ENCODE measurements at regions of chr12 and their contacts with region 1.

Region 1: DNA sequence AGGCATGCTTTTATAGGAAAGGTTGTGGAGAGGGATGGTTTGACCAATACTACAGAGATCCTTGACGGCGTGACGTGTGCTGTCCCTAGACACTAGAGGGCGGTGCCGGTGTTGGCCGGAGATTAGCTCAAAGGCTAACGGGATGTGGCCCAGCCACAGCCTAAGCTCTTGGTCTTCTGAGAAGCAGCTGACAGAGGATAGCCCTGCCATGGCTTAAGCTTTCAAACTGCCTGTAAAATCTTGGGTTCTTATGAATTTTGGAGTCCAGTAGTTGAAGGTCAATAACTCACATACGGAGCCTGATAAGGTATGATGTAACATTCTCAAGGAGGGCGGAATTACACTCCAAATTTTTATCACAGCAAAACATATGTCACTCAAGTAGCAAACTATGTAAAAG is 515.7 kb upstream of the ATXN7L3B start:
- DNase-seq: peak in 3 of 5 donors; percentile 13 to 65 (median 45)
- ATAC-seq: peak in 3 of 4 donors; percentile 76 to 85 (median 80)
- H3K4me3 ChIP-seq: no peak overlapping the region
- H3K27ac ChIP-seq: no peak overlapping the region
- H3K4me1 ChIP-seq: no peaks in the 10 kb centered on the region
- H3K27me3 ChIP-seq: no peaks in the 10 kb centered on the region
- CTCF ChIP-seq: peak in 10 of 12 donors; percentile 19 to 57 (median 35)
- POLR2A ChIP-seq: no peak

Region 2: GRCh38 chr12:74152370-74152769 is 130.4 kb after region 1 on chr12:
- intact Hi-C with region 1: no loop called
- DNase-seq: no peak
- ATAC-seq: no peak
- H3K4me3 ChIP-seq: no peak overlapping the region
- H3K27ac ChIP-seq: no peak overlapping the region
- H3K4me1 ChIP-seq: no peaks in the 10 kb centered on the region
- H3K27me3 ChIP-seq: no peaks in the 10 kb centered on the region
- CTCF ChIP-seq: no peak
- POLR2A ChIP-seq: no peak

Region 3: DNA sequence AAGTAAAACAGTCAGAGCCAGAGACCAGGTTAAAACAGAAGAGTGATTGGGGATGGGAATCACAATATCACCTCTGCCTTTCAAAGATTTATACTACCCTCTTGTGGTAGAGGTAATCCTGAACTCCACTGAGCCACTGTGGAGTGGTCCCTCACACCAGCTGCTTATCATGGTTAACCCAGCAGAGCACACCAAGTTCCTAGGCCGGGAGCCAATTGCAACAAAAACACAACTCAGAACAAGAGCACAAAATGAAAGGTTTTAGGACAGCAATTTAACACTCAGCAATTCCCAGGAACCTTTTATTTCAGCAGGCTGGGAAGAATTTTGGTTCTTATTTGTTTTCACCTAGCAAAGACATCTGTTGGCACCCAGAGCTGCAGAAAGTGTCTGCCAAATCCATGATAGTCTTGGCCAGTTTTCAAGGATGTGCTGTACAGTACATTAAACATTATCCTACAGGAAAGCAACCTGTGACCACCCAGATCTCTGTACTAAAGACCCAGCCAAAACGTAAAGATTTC is 295.2 kb after region 1 on chr12:
- intact Hi-C with region 1: loop called in 1 of 10 experiments (anchors 5 kb)
- DNase-seq: peak in 3 of 5 donors; percentile 21 to 57 (median 32)
- ATAC-seq: peak; percentile 80 to 92 (median 84)
- H3K4me3 ChIP-seq: no peak overlapping the region
- H3K27ac ChIP-seq: no peak overlapping the region
- H3K4me1 ChIP-seq: no peaks in the 10 kb centered on the region
- H3K27me3 ChIP-seq: no peaks in the 10 kb centered on the region
- CTCF ChIP-seq: peak in 8 of 12 donors; percentile 10 to 55 (median 35)
- POLR2A ChIP-seq: no peak

Region 4: DNA sequence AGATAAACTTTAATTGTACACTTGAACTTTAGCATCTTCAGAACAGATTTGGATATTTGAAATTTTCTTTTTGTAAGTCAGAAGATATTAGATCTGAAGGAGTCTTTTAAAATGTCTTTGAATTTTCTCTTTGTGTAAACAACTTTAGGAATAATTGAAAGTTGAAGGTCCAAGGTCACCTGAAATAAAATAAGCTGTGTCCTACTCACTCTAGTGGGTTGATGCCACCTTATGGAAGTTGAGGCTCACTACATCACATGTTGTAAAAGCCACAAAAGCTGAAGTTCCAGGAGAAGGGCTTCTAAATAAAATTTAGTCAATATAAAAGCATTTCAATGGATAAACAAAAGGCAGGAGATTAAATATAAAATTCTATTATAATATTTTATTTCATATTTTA is 393.7 kb after region 1 on chr12:
- intact Hi-C with region 1: loop called in 1 of 10 experiments (anchors 10 kb)
- DNase-seq: no peak
- ATAC-seq: no peak
- H3K4me3 ChIP-seq: no peak overlapping the region
- H3K27ac ChIP-seq: no peak overlapping the region
- H3K4me1 ChIP-seq: no peaks in the 10 kb centered on the region
- H3K27me3 ChIP-seq: peaks cover 0 to 3% (median 0%) of the 10 kb centered on the region in 9 donors
- CTCF ChIP-seq: peak in 10 of 12 donors; percentile 6 to 43 (median 26)
- POLR2A ChIP-seq: no peak